ENCODE measurements at regions of chr17 and their contacts with region 1.

Region 1: DNA sequence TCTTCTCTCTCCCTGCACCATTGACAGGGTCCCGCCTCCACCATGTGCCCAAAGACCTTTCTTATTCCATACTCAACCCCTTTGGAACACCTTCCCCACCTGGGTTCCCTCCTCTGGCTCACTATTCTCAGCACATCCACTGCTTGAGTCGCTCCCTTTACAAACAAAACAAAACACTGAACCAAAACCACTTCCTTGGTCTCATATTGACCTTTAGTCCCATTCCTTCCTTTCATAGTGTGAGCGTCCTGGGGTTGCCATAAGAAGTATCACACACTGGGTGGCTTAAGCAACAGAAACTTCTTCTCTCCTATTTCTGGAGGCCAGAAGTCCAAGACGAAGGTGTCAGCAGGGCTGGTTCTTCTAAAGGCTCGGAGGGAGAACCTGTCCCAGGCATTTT is 6.1 kb upstream of the TNRC6C start:
- DNase-seq: no peak
- H3K4me3 ChIP-seq: no peak overlapping the region
- H3K27ac ChIP-seq: no peak overlapping the region
- H3K4me1 ChIP-seq: peaks cover 0 to 3% (median 0%) of the 10 kb centered on the region in 4 donors
- H3K27me3 ChIP-seq: no peaks in the 10 kb centered on the region
- CTCF ChIP-seq: no peak

Region 2: GRCh38 chr17:77892469-77893143 is 59.8 kb before region 1 on chr17:
- intact Hi-C with region 1: loop called (anchors 5 kb)
- DNase-seq: peak in 1 of 2 donors; percentile 42
- H3K4me3 ChIP-seq: no peak overlapping the region
- H3K27ac ChIP-seq: no peak overlapping the region
- H3K4me1 ChIP-seq: no peaks in the 10 kb centered on the region
- H3K27me3 ChIP-seq: no peaks in the 10 kb centered on the region
- CTCF ChIP-seq: no peak

Region 3: DNA sequence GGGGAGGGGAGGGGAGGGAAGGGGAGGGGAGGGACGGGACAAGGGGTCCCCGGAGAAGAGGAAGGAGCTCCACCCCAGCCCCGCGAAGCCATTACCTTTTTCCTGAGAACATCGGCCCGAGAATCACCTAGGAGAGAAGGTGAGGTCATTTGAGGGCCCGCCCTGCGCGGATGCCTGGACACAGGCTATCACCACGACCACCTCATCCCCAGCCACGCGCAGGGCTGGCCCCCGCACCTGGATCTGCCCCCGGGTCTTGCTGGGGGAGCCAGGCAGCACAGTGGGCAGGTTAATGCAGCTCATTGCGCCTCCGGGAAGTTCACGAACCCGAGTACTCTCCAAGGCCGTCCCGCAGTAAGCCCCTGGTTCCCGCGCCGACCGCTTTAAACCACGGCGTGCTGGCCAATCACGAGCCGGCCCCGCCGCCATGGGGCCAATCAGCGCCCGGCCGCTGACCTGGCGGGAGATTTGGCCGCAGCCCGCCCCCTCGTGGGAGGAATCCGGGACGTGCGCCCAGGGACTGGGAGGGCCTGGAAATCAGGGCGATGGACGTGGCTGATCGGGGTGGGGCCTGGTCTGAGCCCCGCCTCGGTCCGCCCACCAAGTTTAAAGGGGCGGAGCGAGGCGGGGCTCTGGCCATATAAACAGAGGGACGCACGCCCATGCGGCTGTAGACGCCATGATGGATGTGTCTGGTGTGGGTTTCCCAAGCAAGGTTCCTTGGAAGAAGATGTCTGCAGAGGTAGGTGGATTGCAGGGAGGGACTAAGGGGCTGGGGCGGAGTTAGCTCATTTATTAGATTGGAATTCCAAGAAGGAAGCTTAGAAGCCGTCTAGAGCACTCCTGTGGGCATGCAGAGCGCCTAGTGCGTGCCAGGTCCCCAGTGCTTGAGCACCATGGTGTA is 234.6 kb after region 1 on chr17 and contains the starts of genes AFMID and TK1:
- intact Hi-C with region 1: no loop called
- DNase-seq: peak; percentile 91 to 97
- H3K4me3 ChIP-seq: peak within 1 kb of the TSS; percentile 43 to 54
- H3K27ac ChIP-seq: peak within 1 kb of the TSS; percentile 36 to 53
- H3K4me1 ChIP-seq: peaks cover 0 to 20% (median 12%) of the 10 kb centered on the region in 4 donors
- H3K27me3 ChIP-seq: no peaks in the 10 kb centered on the region
- CTCF ChIP-seq: peak; percentile 77 to 92

Measured in tibial artery (tissue), 4 donors.